Heart right ventricle (tissue), 16 donors: ENCODE measurements at regions of chr18 and their contacts with region 1.

Region 1: GRCh38 chr18:32822197-32822596 is 49.4 kb upstream of the KLHL14 start:
- DNase-seq: no peak
- ATAC-seq: no peak
- H3K4me3 ChIP-seq: no peak overlapping the region
- H3K27ac ChIP-seq: no peak overlapping the region
- H3K4me1 ChIP-seq: no peaks in the 10 kb centered on the region
- H3K27me3 ChIP-seq: no peaks in the 10 kb centered on the region
- CTCF ChIP-seq: no peak

Region 2: DNA sequence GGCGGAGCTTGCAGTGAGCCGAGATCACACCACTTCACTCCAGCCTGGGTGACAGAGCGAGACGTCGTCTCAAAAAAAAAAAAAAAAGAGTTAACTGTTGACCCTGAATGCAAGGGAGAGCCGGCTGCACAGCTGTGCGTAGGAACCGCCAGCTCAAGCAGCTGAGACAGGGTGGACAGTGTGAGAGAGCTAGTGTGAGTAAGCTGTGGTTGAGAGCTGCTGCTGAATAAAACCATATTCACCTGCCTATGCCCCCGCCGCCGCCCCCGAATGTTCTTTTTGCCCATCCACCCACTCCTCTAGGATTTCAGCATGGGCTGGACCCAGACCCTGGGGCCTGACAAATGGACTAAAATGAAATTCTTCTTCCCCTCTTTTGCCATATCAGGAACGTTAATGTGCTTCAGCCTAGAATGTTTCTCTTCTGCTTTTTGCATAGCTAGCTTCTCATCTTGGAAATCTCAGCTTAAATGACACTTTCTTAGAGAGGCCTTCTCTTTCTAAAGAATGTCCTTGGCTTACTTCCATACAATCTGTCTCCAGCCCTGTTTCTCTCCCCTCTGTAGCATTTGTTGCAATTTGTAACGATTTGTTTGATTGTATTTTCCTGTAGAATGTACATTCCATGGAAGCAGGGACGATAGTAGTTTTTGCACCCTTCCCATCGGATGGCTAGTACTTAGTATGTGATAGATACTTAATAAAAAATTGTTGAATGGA is 192.1 kb before region 1 on chr18:
- intact Hi-C with region 1: no loop called
- DNase-seq: no peak
- ATAC-seq: peak in 2 of 8 donors; percentile 37 to 49
- H3K4me3 ChIP-seq: no peak overlapping the region
- H3K27ac ChIP-seq: no peak overlapping the region
- H3K4me1 ChIP-seq: no peaks in the 10 kb centered on the region
- H3K27me3 ChIP-seq: no peaks in the 10 kb centered on the region
- CTCF ChIP-seq: no peak

Region 3: DNA sequence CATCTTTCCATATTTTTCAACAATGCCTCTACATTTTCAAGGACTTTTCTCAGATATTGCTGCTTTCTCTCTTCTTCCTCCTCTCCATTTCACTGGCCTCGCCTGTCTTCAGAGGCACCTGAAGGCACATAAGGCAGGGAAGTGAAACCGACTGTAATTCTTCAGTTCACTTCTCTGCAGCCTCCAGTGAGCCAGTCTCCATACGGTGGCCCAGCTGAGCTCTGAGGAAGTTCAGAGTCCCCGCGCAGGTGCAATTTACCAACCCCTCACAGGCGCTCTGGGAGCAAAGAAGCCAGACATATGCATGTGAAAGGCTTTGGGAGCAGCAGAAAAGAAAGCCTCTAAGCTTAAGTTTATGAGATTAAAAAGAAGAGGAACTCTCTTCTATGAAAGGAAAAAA is 61.8 kb before region 1 on chr18:
- intact Hi-C with region 1: loop called in 1 of 10 experiments (anchors 10 kb)
- DNase-seq: no peak
- ATAC-seq: no peak
- H3K4me3 ChIP-seq: no peak overlapping the region
- H3K27ac ChIP-seq: no peak overlapping the region
- H3K4me1 ChIP-seq: no peaks in the 10 kb centered on the region
- H3K27me3 ChIP-seq: peaks cover 0 to 9% (median 0%) of the 10 kb centered on the region in 7 donors
- CTCF ChIP-seq: no peak